H1 (cell line): ENCODE measurements at regions of chr17 and their contacts with region 1.

Region 1: GRCh38 chr17:6701719-6702118 is 11.4 kb downstream of the SLC13A5 start:
- DNase-seq: peak; percentile 21 to 92
- H3K4me3 ChIP-seq: no peak overlapping the region
- H3K27ac ChIP-seq: no peak overlapping the region
- H3K4me1 ChIP-seq: no peaks in the 10 kb centered on the region; a peak in 1 of 7 replicates
- H3K27me3 ChIP-seq: no peaks in the 10 kb centered on the region; a peak in 2 of 7 replicates
- CTCF ChIP-seq: peak; percentile 70 to 72 (median 70)
- EP300 ChIP-seq: no peak
- POLR2A ChIP-seq: no peak
- RAD21 ChIP-seq: peak; percentile 42 to 60

Region 2: GRCh38 chr17:6334395-6334794 is 367.3 kb before region 1 on chr17:
- CTCF ChIA-PET with region 1: no interaction called
- POLR2A ChIA-PET with region 1: no interaction called
- DNase-seq: no peak
- H3K4me3 ChIP-seq: no peak overlapping the region
- H3K27ac ChIP-seq: no peak overlapping the region
- H3K4me1 ChIP-seq: no peaks in the 10 kb centered on the region
- H3K27me3 ChIP-seq: no peaks in the 10 kb centered on the region; a peak in 1 of 7 replicates
- CTCF ChIP-seq: no peak
- EP300 ChIP-seq: no peak
- POLR2A ChIP-seq: no peak
- RAD21 ChIP-seq: no peak

Region 3: GRCh38 chr17:6555331-6556120 is 146.2 kb before region 1 on chr17:
- CTCF ChIA-PET with region 1: no interaction called
- POLR2A ChIA-PET with region 1: no interaction called
- DNase-seq: peak in 1 of 2 experiments; percentile 67
- H3K4me3 ChIP-seq: peak overlapping the region; percentile 45 to 76 (median 59)
- H3K27ac ChIP-seq: no peak overlapping the region
- H3K4me1 ChIP-seq: peaks cover 4 to 14% (median 12%) of the 10 kb centered on the region in 4 experiments
- H3K27me3 ChIP-seq: peaks cover 14 to 42% (median 36%) of the 10 kb centered on the region in 4 experiments
- CTCF ChIP-seq: no peak
- EP300 ChIP-seq: no peak
- POLR2A ChIP-seq: no peak
- RAD21 ChIP-seq: no peak

Region 4: GRCh38 chr17:6666077-6666521 is 35.6 kb before region 1 on chr17:
- CTCF ChIA-PET with region 1: interaction called, 34 read pairs
- POLR2A ChIA-PET with region 1: no interaction called
- DNase-seq: peak; percentile 66 to 72
- H3K4me3 ChIP-seq: no peak overlapping the region
- H3K27ac ChIP-seq: no peak overlapping the region
- H3K4me1 ChIP-seq: peaks cover 0 to 2% (median 1%) of the 10 kb centered on the region in 4 experiments; a peak in 1 of 7 replicates
- H3K27me3 ChIP-seq: peaks cover 0 to 6% (median 4%) of the 10 kb centered on the region in 4 experiments; a peak in 2 of 7 replicates
- CTCF ChIP-seq: peak; percentile 85 to 97 (median 97)
- EP300 ChIP-seq: no peak
- POLR2A ChIP-seq: no peak
- RAD21 ChIP-seq: peak; percentile 98 to 99

Region 5: GRCh38 chr17:6677158-6677831 is 24.4 kb before region 1 on chr17:
- CTCF ChIA-PET with region 1: interaction called, 17 read pairs
- POLR2A ChIA-PET with region 1: no interaction called
- DNase-seq: no peak
- H3K4me3 ChIP-seq: no peak overlapping the region
- H3K27ac ChIP-seq: no peak overlapping the region
- H3K4me1 ChIP-seq: no peaks in the 10 kb centered on the region; a peak in 1 of 7 replicates
- H3K27me3 ChIP-seq: no peaks in the 10 kb centered on the region
- CTCF ChIP-seq: no peak
- EP300 ChIP-seq: no peak
- POLR2A ChIP-seq: no peak
- RAD21 ChIP-seq: no peak

Region 6: DNA sequence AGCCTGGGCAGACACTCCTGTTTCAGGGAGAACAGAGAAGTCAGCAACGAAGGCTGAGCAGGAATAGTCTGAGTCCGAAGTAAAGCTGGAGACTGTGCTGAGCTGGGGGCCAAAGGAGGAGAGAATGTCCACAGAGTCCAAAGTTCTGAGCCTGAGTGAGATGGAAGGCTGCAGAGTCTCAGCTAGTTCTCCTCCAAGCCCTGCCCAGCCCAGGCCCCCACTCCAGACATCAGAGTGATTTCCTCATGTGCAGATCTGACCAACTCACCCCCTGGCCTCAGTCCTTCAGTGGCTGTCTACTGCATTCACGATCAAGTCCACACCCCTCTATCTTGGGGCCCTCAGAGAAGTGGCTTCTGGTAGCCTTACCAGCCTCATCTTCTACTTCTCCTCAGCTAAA is 10.2 kb before region 1 on chr17:
- CTCF ChIA-PET with region 1: interaction called, 10 read pairs
- POLR2A ChIA-PET with region 1: interaction called, 4 read pairs
- DNase-seq: no peak
- H3K4me3 ChIP-seq: no peak overlapping the region
- H3K27ac ChIP-seq: no peak overlapping the region
- H3K4me1 ChIP-seq: no peaks in the 10 kb centered on the region
- H3K27me3 ChIP-seq: no peaks in the 10 kb centered on the region; a peak in 1 of 7 replicates
- CTCF ChIP-seq: no peak
- EP300 ChIP-seq: no peak
- POLR2A ChIP-seq: no peak
- RAD21 ChIP-seq: no peak

Region 7: DNA sequence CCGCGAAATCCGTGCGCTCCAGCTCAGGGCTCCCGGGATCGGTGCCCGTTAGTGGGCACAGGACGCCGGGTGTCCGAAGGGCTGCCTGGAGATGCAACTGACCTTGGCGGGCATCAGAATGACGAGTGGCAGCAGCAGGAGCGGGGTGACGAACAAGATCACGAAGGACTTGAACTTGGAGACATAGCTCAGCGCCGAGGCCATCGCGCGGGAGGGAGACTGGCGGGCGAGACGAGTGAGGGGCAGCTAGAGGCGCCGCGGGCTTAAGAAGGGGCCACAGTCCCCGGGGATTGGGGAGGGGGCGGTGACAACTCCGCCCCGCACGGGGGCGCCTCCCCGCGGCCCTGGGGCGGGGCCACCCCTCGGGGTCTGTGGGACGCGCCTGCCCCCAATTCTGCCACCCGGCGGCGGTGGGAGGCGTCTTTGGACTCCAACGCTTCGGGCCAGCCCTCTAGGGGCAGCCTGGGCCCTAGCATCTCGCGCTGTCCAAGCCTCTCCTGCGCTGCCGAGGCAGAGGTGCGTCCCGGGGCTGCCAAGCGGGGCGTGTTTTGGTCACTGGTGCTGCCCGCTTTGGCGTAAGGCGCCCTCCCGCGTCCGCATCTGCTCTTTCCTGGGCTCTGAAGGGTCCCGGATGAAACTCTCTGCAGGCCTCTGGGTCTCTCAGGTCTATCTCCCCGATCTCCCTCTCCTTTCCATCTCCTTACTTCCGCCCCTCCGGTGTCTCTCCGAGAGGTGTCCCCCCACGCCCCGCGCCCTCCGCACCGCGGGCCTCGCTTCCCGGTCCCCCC is 11.6 kb after region 1 on chr17 and contains the start of gene SLC13A5:
- CTCF ChIA-PET with region 1: interaction called, 72 read pairs
- POLR2A ChIA-PET with region 1: interaction called, 5 read pairs
- DNase-seq: peak; percentile 38 to 84
- H3K4me3 ChIP-seq: peak within 1 kb of the TSS; percentile 39 to 68 (median 60)
- H3K27ac ChIP-seq: no peak within 1 kb of the TSS
- H3K4me1 ChIP-seq: peaks cover 0 to 12% (median 9%) of the 10 kb centered on the region in 4 experiments; a peak in 6 of 7 replicates
- H3K27me3 ChIP-seq: peaks cover 9 to 38% (median 31%) of the 10 kb centered on the region in 4 experiments
- CTCF ChIP-seq: peak; percentile 47 to 96 (median 72)
- EP300 ChIP-seq: no peak
- POLR2A ChIP-seq: peak in 1 of 2 experiments; percentile 36; a peak in 1 of 3 replicates
- RAD21 ChIP-seq: peak in 1 of 2 experiments; percentile 52; a peak in 3 of 4 replicates
- total RNA-seq, gene SLC13A5: 1.8 and 2.6 TPM in 2 replicates